Motor neuron (in vitro differentiated cells): ENCODE measurements at regions of chr19 and their contacts with region 1.

Region 1: DNA sequence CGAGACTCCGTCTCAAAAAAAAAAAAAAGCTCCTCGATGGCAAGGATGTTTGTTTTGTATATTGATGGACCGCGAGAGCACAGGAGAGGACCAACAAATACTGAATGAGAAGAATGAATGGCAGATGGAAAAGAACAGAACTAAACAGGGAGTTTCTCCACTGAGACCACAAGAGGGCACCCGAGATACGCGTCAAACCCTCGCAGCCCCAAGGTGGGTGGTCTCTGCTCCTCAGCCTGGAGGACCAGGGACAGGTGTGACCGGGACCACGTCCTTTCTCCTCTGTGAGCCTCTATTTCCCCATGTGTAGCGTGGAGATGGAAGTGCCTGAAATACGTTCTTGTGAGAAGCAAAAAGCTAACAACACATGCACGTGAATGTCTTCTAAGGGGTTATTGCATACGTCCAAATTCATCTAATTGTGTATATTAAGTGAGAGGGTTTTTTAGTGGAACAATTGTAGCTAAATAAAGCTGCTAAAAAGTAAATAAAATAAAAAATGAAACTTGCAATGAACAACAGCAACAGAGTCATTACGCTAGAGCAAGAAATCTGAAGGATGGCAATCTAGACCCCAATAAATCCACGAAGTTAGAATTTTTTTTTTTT is 8.3 kb upstream of the CDC42EP5 start:
- ATAC-seq: peak; percentile 63 to 83 (median 74)
- H3K4me3 ChIP-seq: no peak overlapping the region
- H3K27ac ChIP-seq: no peak overlapping the region
- H3K4me1 ChIP-seq: peaks cover 3% of the 10 kb centered on the region in 2 donors

Region 2: DNA sequence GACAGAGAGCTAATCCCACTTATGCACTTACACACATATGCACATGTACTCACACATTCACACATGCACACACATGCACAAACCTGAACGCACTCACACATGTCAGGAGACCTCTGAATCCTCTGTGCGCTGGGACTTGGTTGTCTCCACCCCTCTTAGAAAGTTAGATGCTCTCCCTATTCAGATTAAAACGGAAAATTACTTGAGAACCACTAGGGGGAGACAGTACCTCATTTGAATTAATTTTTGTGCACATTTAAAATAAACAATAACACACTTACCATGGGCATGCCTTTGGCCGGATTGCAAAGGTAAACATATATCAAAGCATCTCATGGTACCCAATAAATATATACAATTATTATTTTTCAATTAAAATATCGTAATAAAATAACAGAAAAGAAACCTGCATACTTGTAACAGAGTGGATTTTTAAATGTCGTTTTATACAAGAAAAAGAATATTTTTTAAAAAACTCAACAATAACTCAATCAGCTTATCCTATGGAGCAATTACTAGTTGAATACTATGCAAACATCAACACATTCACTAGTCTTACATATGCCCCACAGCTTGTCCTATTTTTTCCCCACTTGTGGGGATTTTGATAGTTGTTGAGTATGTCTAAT is 171.9 kb after region 1 on chr19:
- in situ Hi-C with region 1: loop called in 1 of 9 experiments (anchors 25 kb)
- ATAC-seq: peak in 2 of 8 experiments; percentile 52 to 55
- H3K4me3 ChIP-seq: no peak overlapping the region
- H3K27ac ChIP-seq: no peak overlapping the region
- H3K4me1 ChIP-seq: no peaks in the 10 kb centered on the region